Activated CD4-positive, alpha-beta memory T cell treated with anti-CD3 and anti-CD28 coated beads for 36 hours (primary cell): ENCODE measurements at regions of chr14 and their contacts with region 1.

Region 1: GRCh38 chr14:23555882-23556699 is at the start of gene THTPA:
- DNase-seq: peak; percentile 95
- H3K4me3 Mint-ChIP-seq: peak within 1 kb of the TSS; percentile 90
- H3K27ac Mint-ChIP-seq: peak within 1 kb of the TSS; percentile 93
- H3K4me1 Mint-ChIP-seq: peaks cover 40% of the 10 kb centered on the region
- H3K27me3 Mint-ChIP-seq: no peaks in the 10 kb centered on the region
- total RNA-seq, gene THTPA: 7.7 to 8.2 TPM

Region 2: DNA sequence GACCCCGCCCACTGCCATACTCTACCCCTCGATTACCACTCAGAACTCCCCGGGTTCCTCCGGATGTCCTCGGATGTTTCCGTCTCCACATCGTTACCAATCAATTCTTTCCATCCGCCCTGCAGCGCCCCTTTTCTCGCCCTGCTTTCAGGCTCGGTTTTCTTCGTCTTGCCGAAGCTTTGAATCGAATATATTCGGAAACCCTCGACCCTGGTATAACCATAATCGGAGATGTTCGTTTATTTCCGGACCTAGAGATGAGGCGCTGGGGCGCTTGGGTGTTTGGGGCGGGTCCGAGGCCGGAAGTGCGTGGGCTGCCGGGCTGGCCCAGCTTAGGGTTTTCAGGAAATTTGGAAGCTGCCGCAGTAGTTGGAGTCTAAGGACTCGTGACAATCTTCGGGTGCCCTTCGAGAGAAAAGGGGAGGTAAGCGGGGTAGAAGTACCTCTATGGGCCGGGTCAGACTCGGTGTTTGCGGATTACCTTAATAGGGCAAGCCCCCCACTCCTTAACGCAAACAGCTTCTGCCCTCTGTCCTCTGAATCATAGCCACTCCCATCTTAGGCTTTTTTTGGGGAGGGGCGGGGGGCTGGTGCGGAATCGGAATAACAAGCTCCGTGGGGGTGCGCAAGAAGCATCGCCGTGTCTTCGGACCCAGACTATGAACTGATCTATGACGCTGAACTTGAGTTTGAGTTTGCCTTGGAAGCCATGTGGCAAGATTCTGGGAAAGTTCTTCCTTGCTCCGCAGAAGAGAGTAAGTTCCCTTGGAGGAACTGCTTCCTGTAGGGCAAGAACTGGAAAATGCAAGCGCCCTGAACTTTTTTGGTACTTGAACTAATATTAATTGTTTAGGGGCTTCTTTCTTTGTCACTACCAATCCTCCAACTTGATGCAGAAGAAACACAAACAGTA is 460.6 kb before region 1 on chr14 and contains the start of gene C14orf119:
- CTCF ChIA-PET with region 1: no interaction called
- POLR2A ChIA-PET with region 1: no interaction called
- intact Hi-C with region 1: loop called (anchors 2 kb)
- DNase-seq: peak; percentile 100
- H3K4me3 Mint-ChIP-seq: no peak within 1 kb of the TSS
- H3K27ac Mint-ChIP-seq: no peak within 1 kb of the TSS
- H3K4me1 Mint-ChIP-seq: peaks cover 40% of the 10 kb centered on the region
- H3K27me3 Mint-ChIP-seq: no peaks in the 10 kb centered on the region
- total RNA-seq, gene C14orf119: 58.0 to 62.8 TPM

Region 3: GRCh38 chr14:23301288-23301968 is 254.7 kb before region 1 on chr14:
- CTCF ChIA-PET with region 1: no interaction called
- POLR2A ChIA-PET with region 1: no interaction called
- intact Hi-C with region 1: loop called (anchors 5 kb)
- DNase-seq: peak; percentile 98
- H3K4me3 Mint-ChIP-seq: peak overlapping the region; percentile 94
- H3K27ac Mint-ChIP-seq: peak overlapping the region; percentile 94
- H3K4me1 Mint-ChIP-seq: peaks cover 22% of the 10 kb centered on the region
- H3K27me3 Mint-ChIP-seq: peaks cover 5% of the 10 kb centered on the region

Region 4: DNA sequence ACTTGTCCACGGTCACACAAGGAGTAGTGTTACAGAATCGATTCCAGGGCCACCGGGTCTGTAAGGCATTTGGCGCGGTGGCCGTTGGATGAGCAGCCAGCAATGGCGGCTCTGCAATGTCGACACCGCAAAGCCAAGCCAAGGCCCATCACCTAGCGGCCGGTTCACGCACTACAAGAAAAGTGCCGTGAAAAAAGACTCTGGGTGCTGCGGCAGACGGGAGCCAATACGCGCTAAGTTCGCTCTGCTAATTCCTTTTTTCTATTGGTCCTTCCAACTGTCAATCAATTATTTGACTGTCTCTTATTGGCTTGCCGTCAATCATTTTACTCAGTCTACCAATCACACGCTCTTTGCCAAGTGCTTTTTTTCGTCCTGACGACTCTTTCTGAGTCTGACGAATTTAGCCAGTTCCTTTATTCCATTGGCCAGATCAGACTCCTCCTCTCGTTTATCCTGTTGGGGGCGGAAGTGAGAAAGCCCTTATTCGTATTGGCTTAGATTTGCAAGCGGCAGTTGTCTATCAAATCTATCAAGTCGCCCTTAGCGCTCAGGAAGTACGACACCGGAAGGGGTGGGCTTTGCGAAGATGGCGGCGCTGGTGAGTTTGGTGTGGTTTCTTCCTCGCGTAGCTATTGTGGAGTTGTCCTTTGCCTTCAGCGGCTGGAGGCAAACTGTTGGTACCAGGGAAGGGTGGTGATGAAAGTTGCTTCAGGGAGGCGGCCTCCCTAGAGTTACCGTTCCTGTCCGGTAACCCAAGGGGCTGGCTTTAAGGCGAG is 86.8 kb before region 1 on chr14 and contains the start of gene NGDN:
- CTCF ChIA-PET with region 1: interaction called, 223 read pairs
- POLR2A ChIA-PET with region 1: no interaction called
- intact Hi-C with region 1: loop called (anchors 1 kb)
- DNase-seq: peak; percentile 95
- H3K4me3 Mint-ChIP-seq: no peak within 1 kb of the TSS
- H3K27ac Mint-ChIP-seq: no peak within 1 kb of the TSS
- H3K4me1 Mint-ChIP-seq: peaks cover 6% of the 10 kb centered on the region
- H3K27me3 Mint-ChIP-seq: no peaks in the 10 kb centered on the region
- total RNA-seq, gene NGDN: 42.1 to 44.1 TPM

Region 5: GRCh38 chr14:23512156-23512555 is 43.9 kb before region 1 on chr14:
- CTCF ChIA-PET with region 1: interaction called, 13 read pairs
- POLR2A ChIA-PET with region 1: no interaction called
- intact Hi-C with region 1: no loop called
- DNase-seq: peak; percentile 13
- H3K4me3 Mint-ChIP-seq: peak overlapping the region; percentile 53
- H3K27ac Mint-ChIP-seq: no peak overlapping the region
- H3K4me1 Mint-ChIP-seq: peaks cover 3% of the 10 kb centered on the region
- H3K27me3 Mint-ChIP-seq: no peaks in the 10 kb centered on the region